Activated CD4-positive, alpha-beta T cell treated with anti-CD3 and anti-CD28 coated beads, Interleukin-2, amount 10 ng/mL, durations not matched to agents 24 days and 14 days (primary cell): ENCODE measurements at regions of chr11 and their contacts with region 1.

Region 1: DNA sequence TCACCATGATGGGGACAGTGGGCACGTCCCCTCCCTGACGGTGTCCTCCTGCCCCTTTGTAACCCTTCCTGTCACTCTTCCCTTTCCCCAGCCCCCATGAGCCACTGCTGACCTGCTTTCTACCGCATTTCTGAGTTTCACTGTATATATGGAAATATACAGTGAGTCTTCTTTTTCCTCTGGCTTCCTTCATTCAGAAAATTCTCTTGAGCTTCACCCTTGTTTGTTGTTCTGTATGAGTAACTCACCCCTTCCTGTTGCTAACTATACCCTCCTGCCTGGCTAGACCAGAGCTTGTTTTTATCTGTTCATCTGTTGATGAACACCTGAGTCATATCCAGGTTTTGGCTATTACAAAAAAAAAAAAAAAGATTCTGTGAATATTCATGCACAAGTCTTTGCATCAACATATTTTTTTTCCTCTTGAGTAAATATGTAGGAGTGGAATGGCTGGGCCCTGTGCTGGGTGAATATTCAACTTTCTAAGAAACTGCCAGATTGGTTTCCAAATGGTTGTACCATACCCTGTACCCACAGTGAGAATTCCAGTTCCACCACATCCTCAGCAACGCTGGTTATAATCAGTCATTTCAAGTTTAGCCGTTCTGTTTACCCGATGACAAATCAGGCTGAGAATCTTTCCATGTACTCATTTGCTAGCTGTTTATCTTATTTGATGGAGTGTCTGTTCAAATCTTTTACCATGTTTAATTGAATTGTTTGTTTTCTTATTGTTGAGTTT is 62.0 kb downstream of the IGF2 start:
- DNase-seq: peak; percentile 81
- H3K4me3 Mint-ChIP-seq: peak overlapping the region; percentile 44
- H3K27ac Mint-ChIP-seq: peak overlapping the region; percentile 97
- H3K4me1 Mint-ChIP-seq: peaks cover 22% of the 10 kb centered on the region
- H3K27me3 Mint-ChIP-seq: peaks cover 28% of the 10 kb centered on the region

Region 2: DNA sequence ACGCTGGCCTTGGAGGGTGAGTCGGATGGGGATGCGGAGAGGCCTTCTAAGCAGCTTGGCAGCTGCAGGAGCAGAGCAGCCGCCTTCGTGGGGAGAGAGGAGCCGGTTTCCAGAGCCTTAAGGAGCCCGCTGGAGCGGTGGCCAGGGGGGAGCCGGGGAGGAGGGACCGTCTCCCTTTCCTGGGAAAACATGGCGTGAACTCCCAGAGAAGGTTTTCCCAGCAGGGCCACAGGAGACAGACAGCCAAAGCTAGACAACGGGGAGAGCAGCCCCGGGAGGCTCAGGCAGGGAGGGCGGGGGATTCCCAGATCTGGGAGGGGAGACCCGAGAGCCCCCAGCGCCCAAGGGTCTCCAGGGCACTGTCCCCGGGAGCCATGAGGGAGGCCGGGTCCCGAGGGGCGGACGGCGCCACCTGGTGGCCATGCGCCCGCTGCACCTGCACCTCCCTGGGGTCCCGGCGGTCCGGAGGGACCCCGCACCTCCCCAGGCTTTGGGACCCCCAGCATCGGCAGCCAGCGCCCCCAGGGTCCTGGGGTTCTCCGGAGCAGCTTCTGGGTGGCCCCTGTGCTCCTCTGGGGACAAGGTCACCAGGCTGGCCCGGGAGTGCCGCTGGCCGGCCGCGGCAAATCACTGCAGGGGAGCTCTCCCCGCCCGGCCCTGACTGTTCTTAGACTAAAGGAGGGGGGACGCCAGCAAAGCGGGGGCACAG is 244.9 kb before region 1 on chr11:
- intact Hi-C with region 1: no loop called
- DNase-seq: peak; percentile 91
- H3K4me3 Mint-ChIP-seq: no peak overlapping the region
- H3K27ac Mint-ChIP-seq: no peak overlapping the region
- H3K4me1 Mint-ChIP-seq: no peaks in the 10 kb centered on the region
- H3K27me3 Mint-ChIP-seq: peaks cover 3% of the 10 kb centered on the region

Region 3: DNA sequence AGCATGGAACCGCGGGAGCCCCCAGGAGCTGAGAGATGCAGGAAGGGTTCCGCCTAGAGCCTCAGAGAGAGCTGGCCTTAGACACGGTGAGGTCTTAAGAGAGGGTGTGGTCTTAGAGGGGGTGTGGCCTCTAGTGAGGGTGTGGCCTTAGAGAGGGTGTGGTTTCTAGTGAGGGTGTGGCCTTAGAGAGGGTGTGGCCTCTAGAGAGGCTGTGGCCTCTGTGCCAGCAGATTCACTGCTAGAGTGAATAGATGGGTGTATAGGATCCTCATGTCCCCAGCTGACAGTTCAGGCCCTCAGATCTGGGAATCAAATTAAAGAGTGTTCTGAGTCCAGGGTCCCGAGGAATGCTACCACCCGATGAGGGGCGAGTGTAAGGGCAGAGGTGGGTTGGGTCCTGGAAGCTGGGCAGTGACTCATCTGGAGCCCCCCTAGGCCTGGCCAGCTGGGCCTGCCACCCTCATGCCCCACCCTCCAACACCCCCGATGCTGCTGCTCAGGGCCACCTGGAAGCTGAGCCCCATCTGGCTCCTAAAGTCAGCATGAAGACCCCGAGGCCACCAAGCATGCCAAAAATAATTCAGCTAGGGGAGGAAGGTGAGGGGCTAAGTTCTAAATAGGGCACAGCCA is 12.4 kb after region 1 on chr11:
- intact Hi-C with region 1: loop called (anchors 1 kb)
- DNase-seq: peak; percentile 81
- H3K4me3 Mint-ChIP-seq: no peak overlapping the region
- H3K27ac Mint-ChIP-seq: no peak overlapping the region
- H3K4me1 Mint-ChIP-seq: no peaks in the 10 kb centered on the region
- H3K27me3 Mint-ChIP-seq: peaks cover 5% of the 10 kb centered on the region

Region 4: GRCh38 chr11:2142762-2143202 is 65.5 kb after region 1 on chr11:
- intact Hi-C with region 1: loop called (anchors 1 kb)
- DNase-seq: no peak
- H3K4me3 Mint-ChIP-seq: peak overlapping the region; percentile 51
- H3K27ac Mint-ChIP-seq: peak overlapping the region; percentile 80
- H3K4me1 Mint-ChIP-seq: peaks cover 13% of the 10 kb centered on the region
- H3K27me3 Mint-ChIP-seq: peaks cover 61% of the 10 kb centered on the region

Region 5: DNA sequence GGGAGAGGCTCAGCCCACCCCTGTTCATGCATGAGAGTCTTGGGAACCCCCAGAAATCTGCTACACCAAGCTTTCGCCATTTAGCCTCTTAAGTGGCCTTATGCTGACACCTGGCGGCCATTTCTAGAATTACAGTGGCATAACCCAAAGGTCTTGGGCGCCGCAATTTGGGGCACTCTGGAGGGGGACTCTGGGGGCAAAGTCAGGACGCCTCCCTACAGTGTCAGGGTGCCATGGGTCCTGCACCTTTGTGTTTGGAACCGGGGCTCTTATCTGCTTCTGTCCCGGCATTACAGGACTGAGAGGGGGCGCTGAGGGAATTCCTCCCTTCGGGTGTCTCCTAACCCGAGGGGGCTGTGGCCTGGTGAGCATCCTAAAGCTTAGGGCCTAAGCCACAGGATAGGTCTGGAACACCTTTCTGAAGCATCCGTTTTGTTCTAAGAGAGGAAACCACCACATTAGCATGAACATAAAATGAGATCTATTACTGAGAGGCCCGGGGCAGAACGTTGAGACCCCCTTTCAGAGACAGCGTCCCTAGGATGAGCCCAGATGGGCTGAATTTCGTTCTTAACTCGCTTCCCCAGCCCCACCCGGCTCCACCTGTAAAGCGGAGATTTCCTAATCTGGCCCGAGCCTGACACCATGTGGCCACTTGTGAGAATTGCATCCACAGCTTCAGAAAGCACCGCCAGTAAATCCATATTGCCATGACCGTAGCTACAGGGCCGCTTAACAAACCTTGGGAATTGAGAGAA is 74.4 kb after region 1 on chr11:
- intact Hi-C with region 1: loop called (anchors 2 kb)
- DNase-seq: peak; percentile 92
- H3K4me3 Mint-ChIP-seq: no peak overlapping the region
- H3K27ac Mint-ChIP-seq: no peak overlapping the region
- H3K4me1 Mint-ChIP-seq: peaks cover 3% of the 10 kb centered on the region
- H3K27me3 Mint-ChIP-seq: peaks cover 32% of the 10 kb centered on the region

Region 6: DNA sequence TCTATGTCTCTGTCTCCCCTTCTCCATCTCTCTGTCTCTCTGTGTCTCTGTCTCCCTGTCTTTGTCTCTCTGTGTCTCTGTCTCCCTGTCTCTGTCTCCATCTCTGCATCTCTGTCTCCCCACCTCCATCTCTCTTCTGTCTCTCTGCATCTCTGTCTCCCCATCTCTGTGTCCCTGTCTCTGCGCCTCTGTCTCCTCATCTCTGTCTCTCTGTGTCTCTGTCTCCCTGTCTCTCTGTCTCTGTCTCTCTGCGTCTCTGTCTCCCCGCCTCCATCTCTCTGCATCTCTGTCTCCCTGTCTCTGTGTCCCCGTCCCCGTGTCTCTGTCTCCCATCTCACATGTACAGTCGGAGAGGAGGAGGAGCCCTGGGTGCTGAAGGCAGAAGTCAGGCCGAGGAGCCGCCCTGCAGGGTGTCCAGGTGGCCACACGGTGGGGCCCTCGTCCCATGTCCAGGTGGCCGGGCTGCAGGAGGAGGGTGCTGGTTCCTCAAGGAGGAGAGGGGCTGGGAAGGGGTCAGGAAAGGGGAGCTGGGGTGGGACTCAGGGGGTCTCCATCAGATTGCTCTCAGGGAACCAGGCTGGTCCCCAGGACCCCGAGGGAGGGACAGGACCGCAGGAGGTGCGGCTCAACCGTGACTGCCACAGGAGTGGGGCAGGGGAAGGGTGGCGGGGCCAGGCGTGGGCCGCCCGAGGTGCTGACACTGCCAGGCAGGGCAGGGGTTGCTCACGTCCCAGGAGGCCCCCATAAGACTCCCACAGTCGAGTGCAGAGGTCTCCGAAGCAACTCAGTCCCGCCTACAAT is 119.9 kb after region 1 on chr11:
- intact Hi-C with region 1: no loop called
- DNase-seq: peak; percentile 91
- H3K4me3 Mint-ChIP-seq: no peak overlapping the region
- H3K27ac Mint-ChIP-seq: no peak overlapping the region
- H3K4me1 Mint-ChIP-seq: peaks cover 9% of the 10 kb centered on the region
- H3K27me3 Mint-ChIP-seq: peaks cover 11% of the 10 kb centered on the region

Region 7: GRCh38 chr11:2269601-2270321 is 192.5 kb after region 1 on chr11:
- intact Hi-C with region 1: loop called (anchors 2 kb)
- DNase-seq: peak; percentile 84
- H3K4me3 Mint-ChIP-seq: peak overlapping the region; percentile 70
- H3K27ac Mint-ChIP-seq: peak overlapping the region; percentile 70
- H3K4me1 Mint-ChIP-seq: peaks cover 19% of the 10 kb centered on the region
- H3K27me3 Mint-ChIP-seq: peaks cover 30% of the 10 kb centered on the region

Region 8: DNA sequence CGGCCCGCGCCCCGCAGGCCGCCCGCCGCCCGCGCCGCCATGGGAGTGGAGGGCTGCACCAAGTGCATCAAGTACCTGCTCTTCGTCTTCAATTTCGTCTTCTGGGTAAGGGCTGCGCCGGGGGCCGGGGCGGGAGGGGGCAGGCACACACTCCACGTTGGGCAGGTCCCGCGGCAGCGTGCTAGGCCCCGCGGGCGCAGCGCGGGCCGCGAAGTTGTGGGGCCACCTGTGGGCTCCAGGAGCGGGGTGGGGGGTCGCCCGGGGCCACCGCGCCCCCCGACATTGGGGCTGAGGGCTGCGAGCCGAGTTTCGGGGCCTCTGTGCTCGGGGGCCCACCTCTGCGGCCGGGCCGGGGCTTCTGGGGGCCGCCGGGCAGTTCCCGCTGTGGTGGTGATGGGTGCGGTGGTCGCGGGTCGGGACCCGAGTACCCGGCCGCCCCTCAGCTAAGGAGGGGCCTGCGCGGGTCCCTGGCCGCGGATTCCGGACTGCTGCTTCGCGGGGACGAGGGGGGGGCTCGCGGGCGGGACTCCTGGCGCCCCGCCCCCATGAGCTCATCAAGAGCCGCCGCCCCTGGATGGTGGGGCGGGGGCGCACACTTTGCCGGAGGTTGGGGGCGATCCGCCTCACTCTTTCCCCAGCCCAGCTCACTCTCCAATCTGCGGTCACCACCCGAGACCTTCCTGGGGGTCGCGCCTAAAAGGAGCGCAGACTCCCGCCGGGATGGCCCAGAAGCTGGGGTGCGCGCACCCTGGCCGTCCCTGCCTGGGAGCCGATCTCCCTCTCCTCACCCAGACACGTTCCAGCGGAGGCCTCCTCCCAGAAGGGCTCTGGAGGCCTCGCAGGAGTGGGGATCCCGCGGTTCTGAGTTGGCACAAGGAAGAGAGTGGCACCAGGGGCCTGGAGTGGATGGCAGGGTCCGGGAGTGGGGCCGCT is 300.5 kb after region 1 on chr11:
- intact Hi-C with region 1: no loop called
- DNase-seq: peak; percentile 87
- H3K4me3 Mint-ChIP-seq: peak overlapping the region; percentile 93
- H3K27ac Mint-ChIP-seq: peak overlapping the region; percentile 86
- H3K4me1 Mint-ChIP-seq: peaks cover 18% of the 10 kb centered on the region
- H3K27me3 Mint-ChIP-seq: peaks cover 2% of the 10 kb centered on the region